Brain microvascular endothelial cell (primary cell): ENCODE measurements at regions of chr3 and their contacts with region 1.

Region 1: DNA sequence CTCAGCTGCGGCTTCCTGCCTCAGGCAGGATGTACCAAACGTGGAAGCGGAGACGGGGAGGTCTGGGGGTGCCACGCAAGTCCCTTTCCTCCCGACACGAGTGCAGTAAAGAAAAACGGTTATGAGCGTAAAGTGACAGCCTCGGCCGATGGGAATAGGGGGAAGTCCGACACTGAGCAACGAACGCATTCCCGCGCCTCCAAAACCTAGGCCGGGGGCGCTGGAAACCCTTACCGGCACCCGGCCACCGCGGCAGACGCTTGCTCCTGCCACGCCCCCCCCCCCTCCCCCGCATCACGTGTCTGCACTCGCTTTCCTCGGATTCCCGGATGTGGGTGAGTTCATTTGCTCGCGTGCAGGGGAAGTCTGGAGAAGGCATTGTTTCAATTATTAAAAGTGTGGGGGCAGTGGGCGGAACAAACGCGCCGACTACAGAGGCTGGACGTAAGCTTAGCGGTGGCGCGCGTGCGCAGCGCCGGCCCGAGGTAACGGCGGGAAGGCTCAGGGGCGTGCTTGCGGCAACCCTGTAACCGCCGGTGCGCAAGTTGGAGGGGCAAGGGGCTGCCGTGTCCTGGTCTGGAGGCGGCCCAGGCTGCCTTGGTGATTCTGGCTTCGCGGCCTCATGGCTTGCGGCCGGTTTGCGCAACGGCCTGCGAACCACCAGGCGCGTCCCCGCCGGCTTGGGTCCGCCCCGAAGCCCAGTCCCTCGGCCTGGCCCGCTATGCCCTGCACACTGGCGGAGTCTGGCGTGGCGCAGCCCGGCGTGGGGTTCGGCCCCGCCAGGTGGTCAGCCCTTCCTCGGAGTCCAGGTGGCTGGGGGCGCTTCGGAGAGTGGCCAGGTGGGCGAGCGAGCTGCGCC is at the starts of genes ANAPC13 and CEP63:
- DNase-seq: peak; percentile 98
- H3K4me3 ChIP-seq: peak within 1 kb of the TSS; percentile 81
- H3K27ac ChIP-seq: peak within 1 kb of the TSS; percentile 94
- H3K27me3 ChIP-seq: no peaks in the 10 kb centered on the region
- CTCF ChIP-seq: no peak

Region 2: DNA sequence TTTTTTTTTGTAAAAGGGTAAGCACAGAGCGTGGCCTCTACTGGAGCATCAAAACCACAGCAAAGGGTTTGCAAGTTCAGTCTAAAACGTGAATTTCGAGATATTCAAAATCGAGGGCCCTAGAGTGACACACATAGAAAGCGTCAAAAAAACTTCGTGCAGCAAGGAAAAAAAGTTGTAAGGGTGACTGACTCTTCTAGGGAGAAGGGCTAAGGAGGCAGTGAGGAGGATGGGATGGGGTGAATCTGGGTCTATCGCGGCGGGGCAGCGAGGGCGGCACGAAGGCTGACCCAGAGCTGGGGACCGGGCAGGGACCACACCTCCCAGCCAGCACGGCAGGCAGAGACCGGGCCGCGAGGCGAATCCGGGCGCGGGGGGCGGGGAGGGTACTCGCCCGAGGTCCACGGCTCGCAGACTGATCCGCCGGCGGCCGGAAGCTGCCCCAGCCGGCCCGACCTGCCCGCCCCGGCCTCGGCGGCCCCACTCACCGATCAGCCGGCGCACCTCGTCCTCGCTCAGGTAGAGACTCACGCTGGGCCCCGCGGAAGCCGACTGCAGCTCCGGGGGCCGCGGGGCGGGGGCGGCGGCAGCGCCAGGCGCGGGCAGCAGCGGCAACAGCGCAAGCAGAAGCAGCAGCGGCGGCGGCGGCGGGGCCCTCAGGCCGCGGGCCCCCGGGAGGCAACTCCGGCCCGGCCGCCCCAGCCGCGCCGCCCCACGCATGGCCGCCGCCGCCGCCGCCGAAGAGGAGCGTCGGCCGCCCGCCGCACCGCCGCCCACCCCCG is 235.8 kb before region 1 on chr3:
- in situ Hi-C with region 1: loop called (anchors 25 kb)
- DNase-seq: peak; percentile 24
- H3K4me3 ChIP-seq: peak overlapping the region; percentile 78
- H3K27ac ChIP-seq: peak overlapping the region; percentile 81
- H3K27me3 ChIP-seq: no peaks in the 10 kb centered on the region
- CTCF ChIP-seq: no peak

Region 3: GRCh38 chr3:135040321-135041240 is 554.6 kb after region 1 on chr3:
- in situ Hi-C with region 1: no loop called
- DNase-seq: no peak
- H3K4me3 ChIP-seq: no peak overlapping the region
- H3K27ac ChIP-seq: no peak overlapping the region
- H3K27me3 ChIP-seq: no peaks in the 10 kb centered on the region
- CTCF ChIP-seq: no peak